Activated CD4-positive, alpha-beta memory T cell treated with anti-CD3 and anti-CD28 coated beads for 36 hours (primary cell): ENCODE measurements at regions of chr15 and their contacts with region 1.

Region 1: DNA sequence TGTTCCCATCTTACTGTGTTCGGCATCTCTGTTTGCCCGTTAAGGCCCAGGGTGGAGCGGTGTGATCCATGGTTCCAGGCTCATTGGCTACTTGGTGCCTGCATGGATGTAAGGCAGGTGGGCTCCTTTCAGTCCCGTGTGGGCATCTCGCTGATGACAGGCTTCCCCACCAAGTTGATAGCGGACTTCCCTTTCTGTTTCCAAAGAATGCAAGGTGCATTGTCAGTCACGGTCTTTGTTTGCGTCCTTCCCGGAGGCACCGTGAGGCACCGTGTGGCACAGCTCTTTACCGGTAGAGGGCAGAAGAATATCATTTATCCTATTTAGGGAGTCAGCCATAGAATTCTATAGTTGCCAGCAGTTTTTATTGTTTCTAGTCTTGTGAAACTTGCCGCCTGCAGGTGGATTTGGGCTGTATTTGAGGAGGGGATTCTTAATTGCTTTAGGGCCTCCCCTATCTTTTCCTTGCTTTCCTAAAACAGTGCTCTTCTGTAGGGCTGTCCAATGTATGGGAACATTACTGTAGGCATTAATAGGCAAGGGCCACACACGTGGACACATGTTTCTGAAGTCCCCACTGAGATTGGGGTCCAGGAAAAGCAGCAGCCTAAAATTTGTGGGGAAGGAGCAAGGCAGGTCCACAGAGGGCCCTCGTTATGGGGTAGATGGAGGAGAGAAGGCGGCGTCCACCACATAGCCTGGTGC is 244.1 kb downstream of the SLCO3A1 start:
- DNase-seq: peak; percentile 66
- H3K4me3 Mint-ChIP-seq: no peak overlapping the region
- H3K27ac Mint-ChIP-seq: peak overlapping the region; percentile 6
- H3K4me1 Mint-ChIP-seq: peaks cover 50% of the 10 kb centered on the region
- H3K27me3 Mint-ChIP-seq: no peaks in the 10 kb centered on the region

Region 2: DNA sequence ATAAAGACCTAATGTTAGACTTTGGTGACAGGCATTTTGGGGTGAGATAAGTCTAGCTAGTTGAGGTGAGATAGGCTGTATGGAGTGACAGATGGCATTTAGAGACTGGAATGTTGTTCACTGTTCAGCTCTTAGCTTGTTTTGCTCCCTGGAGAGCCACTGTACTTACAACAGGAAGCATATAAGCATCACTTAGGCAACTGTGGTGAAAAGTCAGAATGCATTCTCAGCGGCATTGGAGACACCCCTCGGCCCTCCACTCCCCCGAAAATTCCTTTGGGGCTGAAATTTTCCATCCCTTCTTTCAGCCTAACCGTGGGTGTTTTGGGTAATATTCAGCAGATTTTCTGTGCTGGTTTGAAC is 170.7 kb before region 1 on chr15:
- CTCF ChIA-PET with region 1: no interaction called
- POLR2A ChIA-PET with region 1: no interaction called
- intact Hi-C with region 1: no loop called
- DNase-seq: no peak
- H3K4me3 Mint-ChIP-seq: no peak overlapping the region
- H3K27ac Mint-ChIP-seq: no peak overlapping the region
- H3K4me1 Mint-ChIP-seq: peaks cover 57% of the 10 kb centered on the region
- H3K27me3 Mint-ChIP-seq: no peaks in the 10 kb centered on the region

Region 3: DNA sequence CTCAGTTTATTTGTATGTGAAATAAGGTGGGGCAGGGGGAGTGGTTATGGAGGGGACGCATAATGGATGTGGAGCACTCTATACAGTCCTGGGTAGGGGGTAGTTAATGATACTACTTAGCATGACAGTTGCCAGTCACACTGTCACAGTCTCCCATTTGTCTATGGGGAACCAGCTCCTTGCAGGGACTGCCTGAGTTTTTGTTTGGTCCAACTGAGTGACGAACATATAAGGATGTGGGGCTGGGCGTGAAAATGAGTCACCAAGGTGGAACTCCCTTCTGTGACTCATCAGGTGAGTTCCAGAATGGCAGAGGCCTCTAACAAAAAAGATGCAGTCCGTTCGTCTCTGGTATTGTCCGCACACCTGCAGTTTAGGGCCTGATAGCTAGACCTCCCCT is 60.8 kb after region 1 on chr15:
- CTCF ChIA-PET with region 1: no interaction called
- POLR2A ChIA-PET with region 1: no interaction called
- intact Hi-C with region 1: loop called (anchors 2 kb)
- DNase-seq: peak; percentile 74
- H3K4me3 Mint-ChIP-seq: no peak overlapping the region
- H3K27ac Mint-ChIP-seq: no peak overlapping the region
- H3K4me1 Mint-ChIP-seq: peaks cover 19% of the 10 kb centered on the region
- H3K27me3 Mint-ChIP-seq: no peaks in the 10 kb centered on the region

Region 4: DNA sequence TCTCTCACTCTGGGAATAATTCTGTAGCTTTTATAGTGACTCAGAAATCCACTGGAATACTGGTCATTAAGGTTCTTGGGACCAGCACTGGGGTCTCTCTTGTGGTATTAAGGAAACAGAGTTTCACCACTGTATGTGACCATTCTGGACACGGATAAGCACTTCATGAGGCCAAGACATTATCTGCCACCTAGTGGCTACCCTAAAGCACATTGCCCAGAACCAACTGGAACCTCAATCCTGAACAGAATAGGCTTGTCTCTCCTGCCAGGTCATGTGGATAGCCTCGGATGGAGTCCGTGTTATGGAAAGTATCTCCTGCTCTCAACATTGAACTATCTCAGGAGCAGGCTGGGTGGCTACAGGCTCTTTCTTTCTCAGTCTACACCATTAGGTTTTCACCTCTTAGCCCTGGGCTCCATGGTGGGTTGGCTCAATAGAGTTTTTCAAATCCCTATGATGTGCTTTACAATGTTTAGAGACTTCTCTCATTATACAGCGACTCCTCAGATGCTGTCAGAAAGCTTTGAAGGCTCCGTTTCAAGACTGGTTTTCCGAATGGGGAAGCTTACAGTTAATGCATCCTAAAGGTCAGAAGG is 128.5 kb after region 1 on chr15:
- CTCF ChIA-PET with region 1: interaction called, 8 read pairs
- POLR2A ChIA-PET with region 1: no interaction called
- intact Hi-C with region 1: loop called (anchors 1 kb)
- DNase-seq: no peak
- H3K4me3 Mint-ChIP-seq: no peak overlapping the region
- H3K27ac Mint-ChIP-seq: no peak overlapping the region
- H3K4me1 Mint-ChIP-seq: no peaks in the 10 kb centered on the region
- H3K27me3 Mint-ChIP-seq: peaks cover 6% of the 10 kb centered on the region

Region 5: GRCh38 chr15:92383519-92384326 is 286.1 kb after region 1 on chr15:
- CTCF ChIA-PET with region 1: no interaction called
- POLR2A ChIA-PET with region 1: no interaction called
- intact Hi-C with region 1: loop called (anchors 1 kb)
- DNase-seq: peak; percentile 53
- H3K4me3 Mint-ChIP-seq: no peak overlapping the region
- H3K27ac Mint-ChIP-seq: no peak overlapping the region
- H3K4me1 Mint-ChIP-seq: no peaks in the 10 kb centered on the region
- H3K27me3 Mint-ChIP-seq: peaks cover 24% of the 10 kb centered on the region

Region 6: DNA sequence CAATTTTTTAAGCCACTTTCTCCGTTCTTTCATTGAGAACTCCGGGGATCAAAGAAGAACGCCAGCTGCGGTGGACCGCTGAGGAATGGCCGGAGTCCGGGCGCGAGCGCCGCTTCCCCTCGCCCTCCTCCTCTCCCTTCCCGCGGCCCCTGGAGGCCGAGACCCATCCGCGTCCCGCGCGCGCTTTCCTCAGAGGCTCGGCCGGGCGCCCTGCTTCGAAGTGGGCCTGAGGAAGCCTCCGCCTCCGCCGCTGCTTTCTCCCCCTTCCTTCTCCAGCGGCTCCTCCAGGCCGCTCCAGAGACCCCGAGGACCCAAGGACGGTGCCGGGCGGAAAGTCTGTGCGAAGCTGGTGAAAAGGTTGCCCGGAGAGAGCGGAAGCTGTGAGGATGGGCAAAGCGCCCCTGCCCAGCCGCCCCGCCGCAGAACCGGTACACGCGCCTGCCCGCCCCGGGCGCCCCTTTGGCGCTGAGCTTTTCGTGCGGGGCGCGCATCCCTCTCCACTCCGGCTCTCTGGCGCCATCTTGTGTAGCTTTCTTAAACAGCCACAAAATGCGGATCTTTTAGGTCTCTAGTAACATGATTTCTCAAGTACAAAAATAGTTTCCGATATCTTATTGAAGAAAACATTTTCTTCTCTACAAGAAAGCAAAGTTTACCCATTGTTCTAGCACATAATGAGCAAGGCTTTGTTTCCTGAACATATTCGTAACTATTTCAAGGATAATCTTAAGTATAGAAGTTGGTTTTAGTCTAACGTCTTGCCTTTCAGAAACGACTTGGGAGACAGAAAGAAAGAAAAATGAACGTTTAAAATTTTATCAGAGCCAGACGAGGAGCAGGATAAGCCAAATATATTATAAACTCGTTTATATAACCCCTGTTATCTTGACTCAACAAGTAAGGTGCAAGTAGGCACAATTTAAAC is 617.1 kb after region 1 on chr15:
- CTCF ChIA-PET with region 1: interaction called, 15 read pairs
- POLR2A ChIA-PET with region 1: no interaction called
- intact Hi-C with region 1: loop called (anchors 1 kb)
- DNase-seq: peak; percentile 82
- H3K4me3 Mint-ChIP-seq: peak overlapping the region; percentile 38
- H3K27ac Mint-ChIP-seq: no peak overlapping the region
- H3K4me1 Mint-ChIP-seq: peaks cover 6% of the 10 kb centered on the region
- H3K27me3 Mint-ChIP-seq: peaks cover 22% of the 10 kb centered on the region